Dorsolateral prefrontal cortex (tissue), 120 donors: ENCODE measurements at regions of chr1 and their contacts with region 1.

Region 1: DNA sequence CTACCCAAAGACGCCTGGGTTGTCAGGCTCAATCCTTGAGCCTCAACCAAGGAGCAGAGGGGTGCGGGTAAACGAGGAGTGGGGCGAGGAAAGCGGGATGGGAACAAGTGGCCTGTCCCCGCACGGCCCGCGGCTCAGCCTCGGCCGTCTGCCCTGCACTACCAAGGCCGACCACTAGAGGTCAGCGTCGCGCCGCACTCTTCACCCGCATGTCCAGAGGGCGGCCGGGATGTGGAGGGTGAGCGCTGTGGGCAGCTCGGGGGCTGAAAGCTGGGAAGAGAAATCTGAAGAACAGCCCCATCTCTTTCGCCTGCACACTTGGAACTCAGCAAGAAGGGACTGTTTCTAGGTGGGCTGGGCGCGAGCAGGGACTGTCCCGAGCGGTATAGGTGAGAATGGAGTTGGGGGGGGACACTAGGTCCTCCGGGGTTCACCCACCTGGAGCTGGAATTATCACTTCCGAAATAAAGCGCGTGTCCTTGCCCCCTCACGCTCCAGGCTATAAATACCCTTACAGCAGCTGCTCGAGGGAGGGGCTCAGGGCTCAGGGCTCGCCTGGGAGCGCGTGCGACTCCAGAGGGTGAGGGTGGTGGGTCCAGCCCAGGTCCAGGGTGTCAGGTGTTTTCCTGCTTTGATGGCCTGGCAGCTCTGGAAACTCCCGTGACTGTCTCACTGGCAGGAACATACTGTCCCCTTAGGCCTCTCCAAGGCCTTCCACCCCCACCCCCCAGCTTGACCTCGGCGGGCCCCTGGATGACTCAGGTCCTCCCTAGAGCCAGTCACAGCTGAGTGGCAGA is 9.8 kb downstream of the SLC30A2 start:
- DNase-seq: peak in 9 of 10 donors; percentile 74 to 89 (median 84)
- H3K4me3 ChIP-seq: peak overlapping the region; percentile 66 to 96 (median 83)
- H3K27ac ChIP-seq: peak overlapping the region in 51 of 59 donors; percentile 16 to 90 (median 77)
- H3K27me3 ChIP-seq: no peaks in the 10 kb centered on the region
- CTCF ChIP-seq: peak; percentile 92 to 100 (median 99)

Region 2: DNA sequence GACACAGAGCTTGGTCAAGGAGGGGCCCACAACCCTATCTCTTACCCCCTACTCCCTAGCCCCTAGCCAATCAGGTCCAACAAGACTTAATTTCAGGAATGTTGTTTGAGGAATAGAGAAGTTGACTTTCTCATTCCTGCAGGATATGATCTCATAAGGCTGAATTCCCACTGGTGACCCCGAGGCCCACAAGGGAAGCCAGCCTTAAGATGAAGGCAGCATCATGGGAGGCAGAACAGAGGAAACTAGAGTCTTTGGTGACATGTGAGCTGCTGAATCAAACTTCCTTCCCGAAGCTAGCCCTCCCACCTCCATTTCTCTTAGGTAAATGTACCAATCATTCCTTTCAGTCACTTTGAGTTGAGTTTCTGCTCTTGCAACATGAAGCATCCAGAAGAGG is 66.4 kb after region 1 on chr1:
- intact Hi-C with region 1: loop called in 1 of 2 experiments (anchors 5 kb)
- DNase-seq: no peak
- H3K4me3 ChIP-seq: no peak overlapping the region
- H3K27ac ChIP-seq: no peak overlapping the region
- H3K27me3 ChIP-seq: no peaks in the 10 kb centered on the region
- CTCF ChIP-seq: no peak

Region 3: DNA sequence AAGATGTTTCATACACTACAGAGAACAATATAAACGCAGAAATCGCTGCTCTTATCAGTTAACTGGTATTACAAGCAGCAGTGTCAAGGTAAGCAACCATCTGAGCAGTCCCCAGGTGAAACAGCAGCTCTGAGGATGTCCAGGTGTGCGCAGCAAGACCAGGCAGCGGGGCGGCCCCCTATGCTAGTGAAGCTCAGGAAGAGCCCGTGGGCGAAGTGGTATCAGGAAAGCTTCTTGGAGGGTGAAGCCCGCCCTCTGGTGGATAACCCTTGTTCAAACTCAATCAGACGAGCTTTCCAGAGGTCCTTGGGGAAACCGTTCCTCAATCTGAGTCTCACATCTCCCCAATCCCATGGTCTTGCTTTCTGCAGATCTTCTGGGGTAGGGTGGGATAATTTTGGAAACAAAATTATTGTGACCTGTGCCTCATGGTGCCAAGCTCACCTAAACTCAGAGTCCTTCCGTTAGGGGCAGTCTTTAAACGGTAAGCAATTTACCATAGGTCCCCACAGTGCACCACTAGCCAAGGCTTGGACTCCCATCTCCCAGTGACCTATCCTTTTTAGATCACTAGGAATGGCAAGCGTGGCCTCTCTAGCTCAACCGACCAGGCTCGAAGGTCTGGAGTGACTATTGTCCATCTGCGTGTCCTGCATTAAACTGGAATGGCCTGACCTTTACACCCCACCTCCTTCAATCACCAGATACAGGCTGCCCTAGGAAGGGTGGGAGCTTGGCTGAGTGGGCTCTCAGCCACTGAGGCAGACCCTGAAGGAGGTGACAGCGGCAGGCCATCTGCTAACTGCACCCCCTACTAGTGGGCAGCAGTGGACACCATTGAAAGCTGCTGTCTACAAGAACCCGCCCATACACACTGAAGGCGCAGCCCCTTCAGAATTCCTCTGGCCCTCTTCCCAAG is 109.1 kb after region 1 on chr1:
- intact Hi-C with region 1: loop called (anchors 1 to 5 kb)
- DNase-seq: peak; percentile 59 to 88 (median 80)
- H3K4me3 ChIP-seq: peak overlapping the region in 16 of 59 donors; percentile 5 to 33 (median 19)
- H3K27ac ChIP-seq: no peak overlapping the region
- H3K27me3 ChIP-seq: no peaks in the 10 kb centered on the region
- CTCF ChIP-seq: peak; percentile 57 to 97 (median 89)

Region 4: GRCh38 chr1:26169669-26170471 is 133.7 kb after region 1 on chr1 and contains the start of gene ZNF593:
- intact Hi-C with region 1: loop called in 1 of 2 experiments (anchors 5 kb)
- DNase-seq: peak; percentile 87 to 97 (median 93)
- H3K4me3 ChIP-seq: peak within 1 kb of the TSS; percentile 50 to 99 (median 91)
- H3K27ac ChIP-seq: peak within 1 kb of the TSS in 55 of 59 donors; percentile 2 to 87 (median 65)
- H3K27me3 ChIP-seq: no peaks in the 10 kb centered on the region
- CTCF ChIP-seq: peak; percentile 77 to 99 (median 95)
- total RNA-seq, gene ZNF593: 10.6 to 30.1 (median 17.6) TPM

Region 5: GRCh38 chr1:26321315-26322041 is 285.3 kb after region 1 on chr1:
- intact Hi-C with region 1: loop called in 1 of 2 experiments (anchors 5 kb)
- DNase-seq: peak; percentile 86 to 95 (median 92)
- H3K4me3 ChIP-seq: peak overlapping the region in 15 of 59 donors; percentile 3 to 44 (median 22)
- H3K27ac ChIP-seq: peak overlapping the region in 4 of 59 donors; percentile 3 to 36 (median 12)
- H3K27me3 ChIP-seq: peaks cover 0 to 4% (median 0%) of the 10 kb centered on the region in 45 donors
- CTCF ChIP-seq: peak; percentile 65 to 97 (median 90)